GM10248 (cell line): ENCODE measurements at regions of chr3 and their contacts with region 1.

Region 1: GRCh38 chr3:190321789-190322603 is at the start of gene CLDN1:
- DNase-seq: peak; percentile 83
- CTCF ChIP-seq: peak; percentile 86

Region 2: GRCh38 chr3:190301591-190301990 is 20.4 kb before region 1 on chr3:
- CTCF ChIA-PET with region 1: interaction called, 26 read pairs
- POLR2A ChIA-PET with region 1: no interaction called
- DNase-seq: no peak
- CTCF ChIP-seq: no peak

Region 3: DNA sequence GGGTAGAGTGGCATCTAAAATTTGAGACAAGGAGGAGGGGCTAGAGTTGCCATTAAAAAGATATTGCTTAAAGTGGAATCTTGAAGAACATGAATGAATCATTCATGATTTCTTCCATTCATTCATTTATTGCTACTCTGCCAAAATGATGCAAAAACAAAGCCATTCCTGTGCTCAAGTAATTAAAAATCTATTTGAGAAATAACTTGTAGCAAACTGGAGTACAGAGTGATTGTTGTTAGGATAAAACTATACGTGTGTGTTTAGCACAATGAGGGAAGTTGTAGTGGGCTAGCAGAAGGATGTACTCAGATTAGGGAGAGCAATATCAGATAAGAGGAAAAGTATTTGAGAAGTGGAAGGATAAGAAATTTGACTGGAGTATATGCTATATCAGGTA is 12.0 kb after region 1 on chr3:
- CTCF ChIA-PET with region 1: interaction called, 18 read pairs
- POLR2A ChIA-PET with region 1: no interaction called
- DNase-seq: no peak
- CTCF ChIP-seq: no peak

Region 4: DNA sequence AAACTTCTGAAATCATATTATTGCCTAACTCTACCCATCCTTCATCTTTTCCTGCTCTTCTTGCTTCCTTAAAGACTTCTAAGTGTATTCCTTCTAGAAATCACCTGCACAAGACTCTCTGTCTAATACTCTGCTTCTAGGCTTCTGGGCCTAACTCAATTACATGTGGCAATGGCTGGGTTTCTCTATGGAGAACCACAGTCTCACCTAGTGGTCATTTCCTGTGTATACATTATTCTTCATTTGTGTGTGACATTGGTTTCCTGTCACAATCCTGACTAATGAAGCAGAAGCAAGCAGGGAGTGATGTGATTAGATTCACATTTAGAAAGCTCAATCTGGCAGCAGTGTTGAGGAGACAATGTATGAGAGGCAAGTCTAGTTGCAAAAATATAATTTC is 17.1 kb after region 1 on chr3:
- CTCF ChIA-PET with region 1: interaction called, 18 read pairs
- POLR2A ChIA-PET with region 1: no interaction called
- DNase-seq: no peak
- CTCF ChIP-seq: peak; percentile 13

Region 5: GRCh38 chr3:190458040-190458439 is 136.0 kb after region 1 on chr3:
- CTCF ChIA-PET with region 1: no interaction called
- POLR2A ChIA-PET with region 1: no interaction called
- DNase-seq: no peak
- CTCF ChIP-seq: no peak